ENCODE measurements at regions of chr2 and their contacts with region 1.

Region 1: DNA sequence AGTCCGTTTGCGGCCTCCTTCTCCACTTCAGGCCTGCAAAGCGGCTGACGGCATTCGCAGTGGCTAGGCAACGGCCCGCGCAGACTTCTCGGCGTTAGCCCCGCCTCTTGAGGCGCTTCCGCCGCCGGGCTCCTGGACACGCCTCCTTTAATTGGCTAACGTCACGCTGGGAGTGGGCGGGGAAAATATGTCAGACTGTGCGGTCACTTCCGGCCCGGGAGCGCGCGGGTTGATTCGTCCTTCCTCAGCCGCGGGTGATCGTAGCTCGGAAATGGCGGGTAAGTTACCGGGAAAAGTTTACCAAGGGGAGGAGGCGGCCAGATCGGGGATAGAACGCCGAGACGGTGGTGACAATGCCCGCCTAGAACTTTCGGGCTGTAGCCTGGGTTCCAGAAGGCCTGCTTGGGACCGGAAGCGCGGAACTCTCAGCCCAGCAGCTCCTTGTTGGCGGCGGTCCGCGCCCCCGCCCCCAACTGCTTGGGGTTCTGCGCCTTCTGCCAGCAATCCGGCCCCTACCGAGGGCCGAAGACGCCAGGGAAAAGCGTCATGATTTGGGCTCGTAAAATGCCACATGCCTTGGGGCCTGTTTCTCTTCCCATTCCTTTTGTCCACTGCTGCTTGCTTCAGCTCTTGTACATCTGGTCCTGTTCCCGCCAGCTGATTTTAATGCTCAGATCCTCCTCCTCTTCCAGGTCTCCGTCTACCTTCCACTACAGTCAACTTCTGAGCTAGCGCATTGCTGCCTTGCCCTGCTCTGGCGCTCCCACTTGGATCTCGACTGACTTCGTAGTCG is at the start of gene HAT1:
- DNase-seq: peak; percentile 96 to 99 (median 98)

Region 2: DNA sequence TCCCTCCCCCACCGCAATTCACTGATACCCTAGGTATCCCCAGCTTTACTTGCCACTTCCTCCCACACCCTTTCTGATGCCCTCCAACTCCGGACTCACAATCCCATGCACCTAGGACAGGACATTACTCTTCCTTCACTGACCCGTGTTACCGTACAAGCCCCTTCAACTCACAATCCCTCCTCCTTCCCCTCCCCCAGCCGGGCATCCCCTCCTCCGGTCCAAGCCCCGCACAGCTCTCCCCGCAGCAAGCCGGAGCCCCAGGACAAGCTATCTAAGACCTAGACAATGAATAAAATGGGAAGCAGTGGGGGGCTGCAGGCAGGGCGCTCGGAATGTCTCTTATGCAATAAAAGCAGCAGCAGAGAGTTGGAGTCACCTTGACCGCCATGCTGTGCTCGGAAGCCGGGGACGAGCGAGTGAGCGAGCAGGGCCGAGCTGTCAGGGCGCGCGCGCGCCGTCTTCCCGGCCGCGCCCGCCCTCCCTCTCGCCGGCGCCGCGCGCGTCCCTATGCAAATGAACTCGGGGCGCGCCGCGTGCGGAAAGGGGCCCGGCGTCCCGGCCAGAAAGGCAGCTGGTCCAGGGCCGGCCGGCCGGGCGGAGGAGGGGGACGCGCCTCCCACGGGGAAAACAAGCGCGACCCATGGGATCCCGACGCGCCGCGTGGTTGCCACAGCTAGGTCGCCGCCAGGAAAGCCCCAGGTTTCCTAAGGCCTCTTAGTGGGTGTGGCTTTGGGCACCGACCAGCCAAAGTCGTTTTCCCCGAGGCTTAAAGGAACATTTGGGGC is 28.4 kb before region 1 on chr2 and contains the start of gene SLC25A12:
- intact Hi-C with region 1: loop called (anchors 2 kb)
- DNase-seq: peak; percentile 35 to 92 (median 84)

Region 3: DNA sequence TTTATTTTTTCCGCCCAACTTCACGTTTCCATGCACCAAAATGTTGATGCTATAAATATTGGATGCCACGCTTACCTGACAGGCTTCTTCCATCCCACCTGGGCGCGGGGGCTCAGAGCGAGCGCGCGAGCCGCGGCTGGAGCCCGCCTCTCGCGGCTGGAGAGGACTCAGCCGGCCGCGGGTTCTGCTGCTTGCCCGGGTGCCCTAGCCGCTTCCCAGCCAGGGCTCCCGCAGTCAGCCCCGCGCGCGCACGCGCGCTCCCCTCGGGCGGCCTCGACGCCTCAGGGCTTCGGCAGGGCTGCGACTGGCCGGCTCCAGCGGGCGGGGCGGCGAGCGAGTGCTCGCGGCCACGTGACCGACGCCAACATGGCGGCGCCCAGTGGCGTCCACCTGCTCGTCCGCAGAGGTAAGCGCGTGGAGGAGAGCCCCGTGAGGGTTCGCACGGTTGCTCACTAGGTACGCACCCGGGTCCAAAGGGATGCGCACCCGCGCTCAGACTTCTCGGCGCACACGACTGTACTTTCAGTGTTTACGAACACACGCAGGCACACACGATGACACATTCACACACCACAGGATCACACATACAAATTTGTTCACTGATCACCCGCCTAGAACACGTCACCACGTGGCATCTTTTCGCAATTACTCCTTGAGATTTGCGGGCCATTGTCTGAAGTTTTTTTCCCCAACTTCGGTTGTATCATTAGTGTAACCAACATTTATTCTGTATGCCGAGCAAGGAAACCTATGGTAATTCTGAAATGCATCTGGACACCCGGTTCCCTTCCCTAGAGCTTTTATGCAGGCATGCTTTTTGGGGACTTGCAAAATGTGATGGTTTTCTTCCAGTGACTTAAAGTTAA is 77.4 kb after region 1 on chr2 and contains the start of gene METAP1D:
- intact Hi-C with region 1: loop called (anchors 5 kb)
- DNase-seq: peak; percentile 78 to 97 (median 94)

Measured in head of caudate nucleus (tissue), 42 donors.